ENCODE measurements at regions of chr20 and their contacts with region 1.

Region 1: GRCh38 chr20:3312940-3313682 is 74.1 kb upstream of the SLC4A11 start:
- DNase-seq: no peak
- ATAC-seq: no peak
- H3K4me3 ChIP-seq: no peak overlapping the region
- H3K4me3 Mint-ChIP-seq: no peak overlapping the region
- H3K27ac ChIP-seq: no peak overlapping the region
- H3K27ac Mint-ChIP-seq: peak overlapping the region in 4 of 9 donors; percentile 20 to 67 (median 39)
- H3K4me1 ChIP-seq: no peaks in the 10 kb centered on the region
- H3K4me1 Mint-ChIP-seq: peaks cover 0 to 4% (median 0%) of the 10 kb centered on the region in 7 donors
- H3K27me3 ChIP-seq: no peaks in the 10 kb centered on the region
- H3K27me3 Mint-ChIP-seq: no peaks in the 10 kb centered on the region

Region 2: GRCh38 chr20:3068986-3069900 is 243.9 kb before region 1 on chr20:
- CTCF ChIA-PET with region 1: interaction called, 4 read pairs
- POLR2A ChIA-PET with region 1: no interaction called
- intact Hi-C with region 1: loop called in 1 of 2 experiments (anchors 1 kb)
- DNase-seq: peak in 7 of 9 donors; percentile 52 to 73 (median 62)
- ATAC-seq: peak; percentile 61
- H3K4me3 ChIP-seq: no peak overlapping the region
- H3K4me3 Mint-ChIP-seq: peak overlapping the region in 1 of 10 donors; percentile 25
- H3K27ac ChIP-seq: no peak overlapping the region
- H3K27ac Mint-ChIP-seq: peak overlapping the region in 4 of 9 donors; percentile 32 to 77 (median 52)
- H3K4me1 ChIP-seq: peaks cover 0 to 17% of the 10 kb centered on the region in 2 donors
- H3K4me1 Mint-ChIP-seq: peaks cover 8 to 38% (median 27%) of the 10 kb centered on the region in 7 donors
- H3K27me3 ChIP-seq: no peaks in the 10 kb centered on the region
- H3K27me3 Mint-ChIP-seq: peaks cover 0 to 2% (median 0%) of the 10 kb centered on the region in 5 donors

Region 3: GRCh38 chr20:3121271-3121911 is 191.7 kb before region 1 on chr20:
- CTCF ChIA-PET with region 1: interaction called, 27 read pairs
- POLR2A ChIA-PET with region 1: interaction called, 3 read pairs
- intact Hi-C with region 1: loop called (anchors 1 to 2 kb)
- DNase-seq: peak in 7 of 9 donors; percentile 49 to 75 (median 72)
- ATAC-seq: peak; percentile 85
- H3K4me3 ChIP-seq: peak overlapping the region; percentile 46
- H3K4me3 Mint-ChIP-seq: peak overlapping the region; percentile 68 to 91 (median 83)
- H3K27ac ChIP-seq: peak overlapping the region; percentile 82
- H3K27ac Mint-ChIP-seq: peak overlapping the region; percentile 97 to 100 (median 99)
- H3K4me1 ChIP-seq: peaks cover 5 to 37% of the 10 kb centered on the region in 2 donors
- H3K4me1 Mint-ChIP-seq: peaks cover 22 to 66% (median 51%) of the 10 kb centered on the region in 7 donors
- H3K27me3 ChIP-seq: no peaks in the 10 kb centered on the region
- H3K27me3 Mint-ChIP-seq: no peaks in the 10 kb centered on the region

Region 4: DNA sequence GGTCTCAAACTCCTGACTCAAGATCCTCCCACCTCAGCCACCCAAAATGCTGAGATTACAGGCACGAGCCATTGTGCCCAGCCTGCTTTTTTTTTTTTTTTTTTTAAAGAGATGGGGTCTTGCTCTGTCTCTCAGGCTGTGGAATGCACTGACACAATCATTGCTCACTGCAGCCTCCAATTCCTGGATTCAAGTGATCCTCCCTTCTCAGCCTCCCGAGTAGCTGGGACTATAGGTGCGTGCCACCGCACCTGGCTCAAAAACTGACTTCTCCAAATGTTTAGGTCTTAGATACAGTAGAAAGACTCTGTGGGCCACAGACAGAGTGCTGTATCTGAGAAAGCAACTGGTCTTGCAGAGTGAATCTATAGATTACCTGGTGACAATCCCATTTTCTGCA is 43.1 kb before region 1 on chr20:
- CTCF ChIA-PET with region 1: no interaction called
- POLR2A ChIA-PET with region 1: no interaction called
- intact Hi-C with region 1: no loop called
- DNase-seq: no peak
- ATAC-seq: no peak
- H3K4me3 ChIP-seq: no peak overlapping the region
- H3K4me3 Mint-ChIP-seq: no peak overlapping the region
- H3K27ac ChIP-seq: no peak overlapping the region
- H3K27ac Mint-ChIP-seq: no peak overlapping the region
- H3K4me1 ChIP-seq: no peaks in the 10 kb centered on the region
- H3K4me1 Mint-ChIP-seq: no peaks in the 10 kb centered on the region
- H3K27me3 ChIP-seq: no peaks in the 10 kb centered on the region
- H3K27me3 Mint-ChIP-seq: no peaks in the 10 kb centered on the region